ENCODE measurements at regions of chr15 and their contacts with region 1.

Region 1: GRCh38 chr15:58758138-58758537 is 8.6 kb upstream of the ADAM10 start:
- DNase-seq: no peak
- H3K4me3 ChIP-seq: no peak overlapping the region
- H3K27ac ChIP-seq: peak overlapping the region in 6 of 59 donors; percentile 8 to 50 (median 34)
- H3K27me3 ChIP-seq: no peaks in the 10 kb centered on the region
- CTCF ChIP-seq: peak in 52 of 56 donors; percentile 18 to 75 (median 54)

Region 2: GRCh38 chr15:58269455-58270414 is 488.4 kb before region 1 on chr15:
- intact Hi-C with region 1: loop called in 1 of 2 experiments (anchors 5 kb)
- DNase-seq: peak in 2 of 10 donors; percentile 19 to 54
- H3K4me3 ChIP-seq: no peak overlapping the region
- H3K27ac ChIP-seq: no peak overlapping the region
- H3K27me3 ChIP-seq: no peaks in the 10 kb centered on the region
- CTCF ChIP-seq: peak; percentile 30 to 83 (median 70)

Measured in dorsolateral prefrontal cortex (tissue), 120 donors.